Activated T-helper 2 cell treated with anti-CD3 and anti-CD28 coated beads, Interferon-gamma antibody, Interleukin-2, Interleukin-4, amounts not matched to agents 10 μg/mL and 5 μg/mL and 100 μg/mL, durations not matched to agents 14 hours and 24 hours and 36 hours (primary cell): ENCODE measurements at regions of chr5 and their contacts with region 1.

Region 1: GRCh38 chr5:97183100-97183929 is at the start of gene RIOK2:
- DNase-seq: peak; percentile 89
- H3K4me3 Mint-ChIP-seq: peak within 1 kb of the TSS; percentile 89
- H3K27ac Mint-ChIP-seq: peak within 1 kb of the TSS; percentile 100
- H3K4me1 Mint-ChIP-seq: peaks cover 24% of the 10 kb centered on the region
- H3K27me3 Mint-ChIP-seq: peaks cover 9% of the 10 kb centered on the region
- total RNA-seq, gene RIOK2: 28.1 and 30.5 TPM in 2 replicates

Region 2: GRCh38 chr5:96662725-96663513 is 520.4 kb before region 1 on chr5:
- intact Hi-C with region 1: loop called (anchors 5 kb)
- DNase-seq: peak; percentile 82
- H3K4me3 Mint-ChIP-seq: peak overlapping the region; percentile 90
- H3K27ac Mint-ChIP-seq: peak overlapping the region; percentile 96
- H3K4me1 Mint-ChIP-seq: peaks cover 55% of the 10 kb centered on the region
- H3K27me3 Mint-ChIP-seq: peaks cover 26% of the 10 kb centered on the region

Region 3: DNA sequence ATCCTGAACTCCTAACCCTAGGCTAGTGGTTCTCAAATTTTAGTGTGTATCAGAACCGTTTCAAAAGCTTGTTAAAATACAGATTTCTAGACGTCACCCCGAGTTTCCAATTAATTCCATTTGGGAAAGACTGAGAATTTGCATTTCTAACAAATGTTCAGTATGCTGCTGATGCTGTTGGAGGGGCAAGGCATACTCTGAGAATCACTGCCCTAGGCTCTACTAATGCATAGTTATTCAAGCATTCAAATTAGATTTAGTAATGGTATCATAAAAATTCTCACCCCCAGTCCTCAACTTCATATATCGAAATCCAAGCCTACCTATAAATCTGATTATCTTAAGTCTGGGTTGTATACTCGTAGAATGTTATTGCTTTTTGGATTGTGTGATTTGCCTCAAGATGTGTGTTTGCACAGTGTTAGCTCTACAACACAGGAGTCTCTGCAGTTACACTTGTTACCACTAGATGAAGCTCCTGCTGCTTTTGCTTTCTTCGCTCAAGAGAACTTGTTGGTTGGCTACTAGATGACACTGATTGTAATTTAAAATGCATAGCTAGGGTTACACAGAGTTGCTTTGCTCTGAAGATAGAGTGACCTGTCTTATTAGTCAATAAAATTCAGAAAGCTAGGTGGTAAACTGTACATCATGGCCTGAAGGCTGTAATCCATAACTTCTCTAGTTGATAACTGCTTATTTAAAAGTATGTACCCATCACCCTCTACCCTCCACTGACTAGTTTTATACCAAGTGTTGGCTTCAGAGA is 314.5 kb before region 1 on chr5:
- intact Hi-C with region 1: loop called (anchors 5 kb)
- DNase-seq: no peak
- H3K4me3 Mint-ChIP-seq: no peak overlapping the region
- H3K27ac Mint-ChIP-seq: no peak overlapping the region
- H3K4me1 Mint-ChIP-seq: peaks cover 54% of the 10 kb centered on the region
- H3K27me3 Mint-ChIP-seq: no peaks in the 10 kb centered on the region